ENCODE measurements at regions of chr3 and their contacts with region 1.

Region 1: DNA sequence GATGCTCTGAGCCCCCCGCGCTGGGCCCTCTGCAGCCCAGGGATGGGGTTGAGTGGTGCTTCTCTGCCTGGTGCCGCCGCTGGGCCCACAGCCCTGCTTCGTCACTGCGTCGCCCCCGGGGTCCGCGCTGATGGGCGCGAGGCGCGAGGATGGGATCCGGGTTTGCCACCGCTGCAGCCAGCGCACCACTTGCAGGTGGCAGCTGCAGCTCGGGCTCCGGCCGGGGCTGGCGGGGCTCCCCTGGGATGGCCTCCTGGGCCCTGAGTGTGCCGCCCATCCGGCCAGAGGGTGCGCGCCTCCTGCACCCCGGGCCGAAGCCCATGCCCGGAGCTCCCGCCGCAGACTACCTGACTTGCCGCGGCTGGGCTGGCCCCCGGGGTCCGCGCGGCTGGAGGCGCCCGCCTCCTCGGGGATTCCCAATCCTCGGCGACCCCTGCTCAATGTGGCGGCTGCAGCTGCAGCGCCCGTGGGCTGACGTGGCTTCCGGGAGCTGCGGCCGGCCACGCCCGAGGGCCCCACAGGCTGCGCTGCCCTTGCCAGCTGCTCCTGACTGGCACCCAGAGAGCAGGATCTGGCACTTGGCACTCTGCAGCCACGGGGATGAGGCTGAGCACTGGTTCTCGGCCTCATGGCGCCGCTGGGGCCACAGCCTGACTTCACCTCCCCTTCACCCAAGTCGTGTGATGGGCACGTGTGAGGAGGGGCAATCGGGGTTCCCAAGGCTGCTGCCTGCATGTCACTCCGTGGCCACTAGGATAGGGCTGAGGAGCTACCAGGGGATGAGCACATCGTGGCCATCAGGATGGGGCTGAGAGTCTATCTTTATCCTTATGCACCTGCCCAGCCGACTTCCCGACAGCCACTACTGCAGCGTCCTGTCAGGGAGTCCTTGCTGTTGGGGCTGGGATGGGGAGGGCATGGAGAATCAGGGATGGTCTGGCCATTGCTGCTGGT is 267.9 kb upstream of the FRG2C start:
- ATAC-seq: peak in 1 of 8 experiments; percentile 18
- H3K4me3 ChIP-seq: peak overlapping the region in 2 of 5 donors; percentile 2 to 7
- H3K27ac ChIP-seq: no peak overlapping the region
- H3K4me1 ChIP-seq: no peaks in the 10 kb centered on the region

Region 2: DNA sequence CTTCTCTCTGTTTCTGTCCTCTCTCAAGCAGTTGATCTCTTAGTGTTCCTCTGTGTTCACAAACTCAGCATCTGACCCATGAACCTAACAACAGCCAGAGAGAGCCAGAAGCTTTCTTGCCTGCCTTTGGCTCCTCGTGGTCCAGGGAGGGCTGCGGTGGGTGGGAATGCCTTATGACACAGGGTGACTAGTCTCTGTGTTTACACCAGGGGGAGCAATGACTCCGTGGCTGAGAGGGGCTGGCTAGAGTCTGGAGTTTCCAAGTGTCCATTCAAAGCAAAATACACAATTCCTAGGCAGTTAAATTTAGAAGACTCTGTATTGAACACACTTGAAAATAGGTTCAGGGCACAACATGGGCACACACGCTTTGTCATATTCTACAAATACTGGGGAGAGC is 102.1 kb before region 1 on chr3:
- in situ Hi-C with region 1: loop called in 1 of 9 experiments (anchors 25 kb)
- ATAC-seq: peak; percentile 73 to 100 (median 93)
- H3K4me3 ChIP-seq: no peak overlapping the region
- H3K27ac ChIP-seq: no peak overlapping the region
- H3K4me1 ChIP-seq: no peaks in the 10 kb centered on the region

Region 3: GRCh38 chr3:75303741-75304140 is 92.5 kb before region 1 on chr3:
- in situ Hi-C with region 1: loop called in 3 of 9 experiments (anchors 25 kb)
- ATAC-seq: no peak
- H3K4me3 ChIP-seq: no peak overlapping the region
- H3K27ac ChIP-seq: no peak overlapping the region
- H3K4me1 ChIP-seq: no peaks in the 10 kb centered on the region